Activated CD4-positive, alpha-beta memory T cell treated with anti-CD3 and anti-CD28 coated beads for 36 hours (primary cell): ENCODE measurements at regions of chr15 and their contacts with region 1.

Region 1: GRCh38 chr15:45457641-45458433 is 64.7 kb downstream of the SLC30A4 start:
- DNase-seq: peak; percentile 79
- H3K4me3 Mint-ChIP-seq: peak overlapping the region; percentile 74
- H3K27ac Mint-ChIP-seq: peak overlapping the region; percentile 85
- H3K4me1 Mint-ChIP-seq: peaks cover 45% of the 10 kb centered on the region
- H3K27me3 Mint-ChIP-seq: no peaks in the 10 kb centered on the region

Region 2: GRCh38 chr15:45166834-45167630 is 290.8 kb before region 1 on chr15:
- CTCF ChIA-PET with region 1: interaction called, 9 read pairs
- POLR2A ChIA-PET with region 1: no interaction called
- intact Hi-C with region 1: loop called (anchors 2 kb)
- DNase-seq: peak; percentile 92
- H3K4me3 Mint-ChIP-seq: peak overlapping the region; percentile 62
- H3K27ac Mint-ChIP-seq: peak overlapping the region; percentile 77
- H3K4me1 Mint-ChIP-seq: peaks cover 13% of the 10 kb centered on the region
- H3K27me3 Mint-ChIP-seq: no peaks in the 10 kb centered on the region

Region 3: GRCh38 chr15:45279024-45279698 is 178.7 kb before region 1 on chr15:
- CTCF ChIA-PET with region 1: interaction called, 3 read pairs
- POLR2A ChIA-PET with region 1: no interaction called
- intact Hi-C with region 1: loop called (anchors 2 kb)
- DNase-seq: peak; percentile 98
- H3K4me3 Mint-ChIP-seq: peak overlapping the region; percentile 85
- H3K27ac Mint-ChIP-seq: peak overlapping the region; percentile 57
- H3K4me1 Mint-ChIP-seq: peaks cover 10% of the 10 kb centered on the region
- H3K27me3 Mint-ChIP-seq: no peaks in the 10 kb centered on the region

Region 4: GRCh38 chr15:45429974-45430792 is 27.7 kb before region 1 on chr15:
- CTCF ChIA-PET with region 1: interaction called, 179 read pairs
- POLR2A ChIA-PET with region 1: no interaction called
- intact Hi-C with region 1: loop called (anchors 1 kb)
- DNase-seq: peak; percentile 87
- H3K4me3 Mint-ChIP-seq: peak overlapping the region; percentile 20
- H3K27ac Mint-ChIP-seq: no peak overlapping the region
- H3K4me1 Mint-ChIP-seq: peaks cover 2% of the 10 kb centered on the region
- H3K27me3 Mint-ChIP-seq: peaks cover 3% of the 10 kb centered on the region

Region 5: GRCh38 chr15:45587095-45587860 is 129.4 kb after region 1 on chr15 and contains the start of gene BLOC1S6:
- CTCF ChIA-PET with region 1: interaction called, 39 read pairs
- POLR2A ChIA-PET with region 1: interaction called, 4 read pairs
- intact Hi-C with region 1: loop called (anchors 1 kb)
- DNase-seq: peak; percentile 92
- H3K4me3 Mint-ChIP-seq: peak within 1 kb of the TSS; percentile 99
- H3K27ac Mint-ChIP-seq: peak within 1 kb of the TSS; percentile 100
- H3K4me1 Mint-ChIP-seq: peaks cover 38% of the 10 kb centered on the region
- H3K27me3 Mint-ChIP-seq: no peaks in the 10 kb centered on the region
- total RNA-seq, gene BLOC1S6: 48.5 to 49.4 TPM

Region 6: GRCh38 chr15:45705510-45706473 is 248.0 kb after region 1 on chr15:
- CTCF ChIA-PET with region 1: no interaction called
- POLR2A ChIA-PET with region 1: no interaction called
- intact Hi-C with region 1: loop called (anchors 2 kb)
- DNase-seq: peak; percentile 79
- H3K4me3 Mint-ChIP-seq: peak overlapping the region; percentile 86
- H3K27ac Mint-ChIP-seq: no peak overlapping the region
- H3K4me1 Mint-ChIP-seq: peaks cover 11% of the 10 kb centered on the region
- H3K27me3 Mint-ChIP-seq: peaks cover 4% of the 10 kb centered on the region